GM10248 (cell line): ENCODE measurements at regions of chr7 and their contacts with region 1.

Region 1: DNA sequence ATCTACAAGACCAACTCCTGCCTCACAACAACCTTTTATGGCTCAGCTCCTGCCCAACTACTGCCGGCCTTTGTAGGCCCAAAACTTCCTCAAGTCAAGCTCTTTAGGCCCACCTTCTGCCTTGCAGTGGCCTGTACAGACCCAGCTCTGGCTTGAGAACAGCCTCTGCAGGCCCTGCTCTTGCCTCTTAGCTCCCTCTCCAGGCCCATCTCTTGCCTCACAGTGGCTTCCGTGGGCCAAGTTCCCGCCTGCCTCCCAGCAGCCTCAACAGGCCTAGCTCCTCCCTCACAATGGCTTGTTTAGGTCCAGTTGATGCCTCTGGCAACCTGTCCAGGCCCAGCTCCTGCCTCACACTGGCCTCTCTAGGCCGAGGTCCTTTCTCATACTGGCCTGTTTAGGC is 32.4 kb upstream of the VKORC1L1 start:
- DNase-seq: peak; percentile 45
- CTCF ChIP-seq: peak; percentile 51

Region 2: DNA sequence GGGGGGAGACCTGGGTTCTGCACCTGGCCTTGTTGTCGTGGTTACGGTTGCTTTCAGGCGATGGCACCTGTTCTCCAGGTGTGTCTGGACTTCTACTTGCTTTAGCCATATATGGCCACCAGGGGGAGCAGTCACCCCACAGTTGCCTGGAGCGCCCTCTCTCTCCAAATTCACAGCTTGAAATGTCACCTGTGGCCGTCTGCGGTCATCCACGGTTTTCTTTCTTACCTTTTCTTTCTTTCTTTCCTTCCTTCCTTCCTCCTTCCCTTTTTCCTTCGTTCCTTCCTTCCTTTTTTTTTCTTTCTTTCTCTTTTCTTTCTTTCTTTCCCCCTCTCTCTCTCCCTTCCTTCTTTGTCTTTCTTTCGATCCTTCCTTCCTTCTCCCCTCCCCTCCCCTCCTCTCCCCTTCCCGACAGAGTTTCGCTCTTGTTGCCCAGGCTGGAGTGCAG is 118.1 kb before region 1 on chr7:
- CTCF ChIA-PET with region 1: interaction called, 22 read pairs
- POLR2A ChIA-PET with region 1: no interaction called
- DNase-seq: peak; percentile 65
- CTCF ChIP-seq: peak; percentile 80

Region 3: DNA sequence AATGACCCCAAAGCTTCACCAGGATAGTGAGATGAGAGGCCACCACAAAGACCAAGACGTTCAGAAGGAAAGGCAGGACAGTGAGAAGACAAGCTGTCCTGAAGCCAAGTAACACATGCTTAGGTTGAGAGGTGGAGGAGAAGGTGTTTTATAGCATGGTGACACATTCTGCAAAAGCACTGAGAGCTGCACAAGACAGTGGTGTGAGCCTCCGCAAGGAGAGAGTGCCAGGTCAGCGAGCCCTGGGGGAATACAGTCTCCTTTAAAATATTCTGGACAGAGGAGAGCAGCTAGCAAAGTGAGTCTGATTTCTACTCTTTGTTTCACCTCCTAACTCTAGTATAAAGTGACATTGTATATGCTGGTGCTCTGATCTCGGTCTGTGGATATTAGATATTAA is 35.6 kb before region 1 on chr7:
- CTCF ChIA-PET with region 1: interaction called, 10 read pairs
- POLR2A ChIA-PET with region 1: no interaction called
- DNase-seq: no peak
- CTCF ChIP-seq: no peak

Region 4: GRCh38 chr7:65827366-65827765 is 13.1 kb before region 1 on chr7:
- CTCF ChIA-PET with region 1: interaction called, 47 read pairs
- POLR2A ChIA-PET with region 1: no interaction called
- DNase-seq: no peak
- CTCF ChIP-seq: no peak

Region 5: GRCh38 chr7:65910237-65910636 is 69.8 kb after region 1 on chr7:
- CTCF ChIA-PET with region 1: no interaction called
- POLR2A ChIA-PET with region 1: no interaction called
- DNase-seq: no peak
- CTCF ChIP-seq: no peak

Region 6: DNA sequence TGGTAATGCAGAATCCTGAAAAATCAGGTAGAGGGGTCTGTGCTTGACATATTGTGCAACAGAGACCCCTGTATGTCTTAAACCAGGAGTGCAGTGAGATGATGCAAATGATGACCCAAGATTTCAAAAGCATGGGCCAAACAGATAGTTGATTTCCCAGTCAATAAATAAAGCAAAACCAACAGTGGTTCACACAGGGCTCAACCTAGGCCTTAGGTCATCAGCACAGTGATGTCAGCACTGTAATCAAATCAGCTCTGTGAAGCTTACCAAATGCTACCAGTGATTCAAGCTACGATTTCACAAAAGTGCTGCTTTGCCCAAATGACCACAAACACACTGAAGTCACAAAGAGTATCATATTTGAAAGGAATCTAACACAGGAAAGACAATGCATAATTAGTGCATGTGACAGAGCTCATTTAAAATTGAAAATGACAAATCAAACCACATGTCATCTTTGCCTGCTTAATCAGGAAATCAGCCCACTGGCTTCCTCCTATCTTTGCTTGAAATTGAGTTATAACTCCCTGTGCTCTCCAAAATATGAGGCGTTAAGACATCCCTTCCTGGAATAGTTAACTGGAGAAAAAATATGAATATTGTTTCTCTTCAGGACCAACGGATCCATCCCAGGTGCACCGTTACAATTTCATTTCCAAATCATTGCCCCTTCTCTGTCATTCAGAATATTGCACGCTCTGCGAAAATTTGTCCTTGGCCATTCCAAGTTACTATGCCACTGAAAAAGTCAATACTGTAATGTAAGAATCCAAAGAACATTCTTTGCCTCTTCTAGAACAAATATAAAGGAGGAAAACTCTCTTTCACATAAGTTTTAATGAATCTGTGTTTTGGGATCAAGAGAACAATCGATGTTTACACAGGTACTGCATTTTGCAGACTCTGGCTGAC is 193.3 kb after region 1 on chr7:
- CTCF ChIA-PET with region 1: no interaction called
- POLR2A ChIA-PET with region 1: no interaction called
- DNase-seq: no peak
- CTCF ChIP-seq: no peak